Psoas muscle (tissue), 8 donors: ENCODE measurements at regions of chr1 and their contacts with region 1.

Region 1: DNA sequence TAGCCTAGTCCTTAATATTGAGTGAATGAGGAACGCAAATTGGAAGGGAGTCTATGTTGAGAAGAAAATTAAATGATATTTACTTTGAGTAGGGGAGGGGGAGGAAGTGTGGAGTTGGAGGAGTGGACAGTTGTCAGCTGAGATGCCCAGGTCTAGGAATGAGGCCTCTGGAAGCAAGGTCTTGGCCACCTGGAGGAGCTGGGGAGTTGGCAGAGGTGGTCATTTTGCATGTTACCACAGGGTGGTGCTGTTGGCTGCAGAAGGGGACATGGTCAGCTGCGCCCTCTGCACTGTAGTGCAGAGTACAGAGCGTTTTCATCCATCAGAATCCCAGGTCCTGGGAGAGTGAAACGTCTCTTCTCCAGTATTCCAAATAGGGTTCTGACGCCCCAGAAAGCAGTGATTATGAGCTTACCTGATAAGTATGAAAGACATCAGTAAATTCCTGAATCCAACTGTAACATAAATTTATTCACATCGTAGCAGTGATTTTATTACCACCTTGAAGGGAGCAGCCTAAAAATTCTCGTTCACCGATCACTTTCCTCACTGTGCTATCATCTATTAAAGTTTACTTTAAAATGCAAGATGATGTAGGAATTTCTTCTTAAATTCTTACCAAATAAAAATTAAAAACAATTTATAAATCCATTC is 13.8 kb downstream of the PARK7 start:
- DNase-seq: peak; percentile 62 to 83
- ATAC-seq: peak; percentile 95 to 98 (median 97)
- H3K4me3 ChIP-seq: no peak overlapping the region
- H3K27ac ChIP-seq: peak overlapping the region; percentile 32
- H3K4me1 ChIP-seq: peaks cover 19% of the 10 kb centered on the region
- H3K27me3 ChIP-seq: no peaks in the 10 kb centered on the region
- CTCF ChIP-seq: peak; percentile 91

Region 2: DNA sequence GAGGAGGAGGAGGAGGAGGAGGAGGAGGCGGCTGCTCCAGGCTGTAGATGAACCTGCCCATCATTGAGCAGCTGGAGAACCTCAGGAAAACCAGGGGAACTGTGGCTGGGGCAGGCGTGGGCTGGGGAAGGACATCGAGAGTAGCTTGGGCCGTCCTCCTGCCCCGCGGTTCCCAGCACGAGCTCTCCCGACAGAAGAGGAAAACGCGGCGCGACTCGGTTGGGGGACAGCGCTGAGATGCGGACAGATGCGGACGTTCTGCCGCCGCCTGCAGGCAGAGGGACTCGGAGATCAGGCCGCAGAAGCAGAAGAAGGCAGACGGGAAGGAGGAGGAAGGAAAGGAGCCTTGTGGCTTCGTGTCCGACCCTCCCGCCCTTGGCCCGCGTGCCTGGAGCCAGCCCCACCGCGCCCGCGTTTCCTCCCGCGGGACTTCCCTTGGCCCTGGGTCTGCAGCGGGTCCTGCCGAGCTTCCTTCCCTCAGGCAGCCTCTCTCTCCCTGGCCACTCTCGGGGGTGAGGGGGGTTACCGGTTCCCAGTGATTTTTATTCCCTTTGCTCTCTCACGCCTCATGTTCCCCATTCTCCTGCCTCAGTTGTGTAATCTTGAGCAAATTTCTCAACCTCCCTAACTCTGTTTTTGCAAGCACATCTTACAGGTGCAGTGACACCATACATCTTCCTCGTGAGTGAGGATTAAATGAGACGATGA is 33.0 kb before region 1 on chr1:
- intact Hi-C with region 1: no loop called
- DNase-seq: peak; percentile 59 to 77
- ATAC-seq: peak; percentile 57 to 82 (median 63)
- H3K4me3 ChIP-seq: peak overlapping the region; percentile 43
- H3K27ac ChIP-seq: no peak overlapping the region
- H3K4me1 ChIP-seq: peaks cover 5% of the 10 kb centered on the region
- H3K27me3 ChIP-seq: peaks cover 0 to 35% (median 8%) of the 10 kb centered on the region in 3 donors
- CTCF ChIP-seq: peak; percentile 30

Region 3: DNA sequence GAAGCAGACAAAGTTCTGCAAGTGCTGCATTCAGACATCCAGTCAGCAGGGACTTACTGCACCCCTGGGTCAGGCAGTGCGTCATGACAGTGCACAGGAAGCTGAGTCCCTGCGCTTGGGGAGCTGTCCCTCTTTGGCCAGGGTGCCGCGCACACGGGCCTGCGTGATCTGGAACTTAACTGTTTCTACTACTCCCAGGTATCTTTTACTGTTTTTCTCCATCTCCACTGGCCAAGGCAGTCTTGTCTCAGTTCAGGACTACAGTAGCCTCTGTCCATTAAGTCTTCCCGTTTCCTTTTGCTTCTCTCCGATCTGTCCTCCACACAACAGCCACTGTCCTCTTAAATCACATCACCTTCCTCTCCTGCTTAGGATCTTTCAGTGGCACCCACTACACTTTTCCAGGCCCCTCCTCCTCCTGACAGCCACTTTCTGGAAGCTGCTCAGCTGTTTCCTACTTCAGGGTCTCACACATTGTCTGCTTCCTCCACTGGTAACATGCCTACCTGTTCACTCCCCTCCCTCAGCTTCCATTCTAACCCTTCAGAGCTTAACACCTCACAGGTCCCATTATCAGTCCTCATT is 34.8 kb after region 1 on chr1:
- intact Hi-C with region 1: loop called (anchors 5 kb)
- DNase-seq: no peak
- ATAC-seq: peak in 2 of 4 donors; percentile 20 to 45
- H3K4me3 ChIP-seq: no peak overlapping the region
- H3K27ac ChIP-seq: peak overlapping the region; percentile 76
- H3K4me1 ChIP-seq: peaks cover 57% of the 10 kb centered on the region
- H3K27me3 ChIP-seq: no peaks in the 10 kb centered on the region
- CTCF ChIP-seq: no peak

Region 4: DNA sequence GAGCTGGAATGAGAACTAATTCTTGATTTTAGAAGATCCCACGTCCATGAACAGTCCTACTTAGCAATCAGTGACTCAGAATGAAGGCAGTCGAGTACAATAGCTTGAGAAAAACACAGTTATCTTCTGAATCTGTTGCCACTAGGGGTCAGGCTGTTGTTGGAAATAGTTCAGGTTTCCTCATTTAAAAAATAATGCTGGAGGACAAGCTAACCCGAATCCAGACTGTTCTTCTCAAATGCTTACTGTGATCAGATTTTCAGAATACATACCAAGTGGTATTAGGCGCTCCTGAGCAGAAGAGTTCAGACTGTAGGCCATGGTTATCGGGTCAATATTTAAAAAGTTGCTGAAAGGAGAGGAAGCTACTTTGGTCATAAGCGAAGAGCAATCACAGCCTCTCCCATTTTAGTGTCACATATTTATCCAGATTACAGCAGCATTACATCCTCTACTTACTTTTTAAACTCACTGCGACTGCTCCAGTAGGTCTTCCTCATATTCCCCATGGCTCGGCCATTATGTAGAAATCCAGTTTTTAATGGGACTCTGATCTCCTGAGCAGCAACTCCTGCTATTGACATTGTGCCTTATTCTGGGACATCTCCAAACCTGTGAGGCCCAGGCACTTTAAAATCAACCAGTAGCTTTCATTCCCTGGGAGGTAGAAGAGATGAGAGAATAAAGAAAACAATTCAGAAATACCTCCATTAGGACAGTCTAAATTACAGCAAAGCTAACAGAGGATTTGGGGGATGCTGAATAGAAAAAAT is 39.9 kb after region 1 on chr1:
- intact Hi-C with region 1: loop called (anchors 5 kb)
- DNase-seq: no peak
- ATAC-seq: peak in 2 of 4 donors; percentile 20 to 30
- H3K4me3 ChIP-seq: peak overlapping the region; percentile 1
- H3K27ac ChIP-seq: peak overlapping the region; percentile 62
- H3K4me1 ChIP-seq: peaks cover 78% of the 10 kb centered on the region
- H3K27me3 ChIP-seq: no peaks in the 10 kb centered on the region
- CTCF ChIP-seq: peak; percentile 71

Region 5: DNA sequence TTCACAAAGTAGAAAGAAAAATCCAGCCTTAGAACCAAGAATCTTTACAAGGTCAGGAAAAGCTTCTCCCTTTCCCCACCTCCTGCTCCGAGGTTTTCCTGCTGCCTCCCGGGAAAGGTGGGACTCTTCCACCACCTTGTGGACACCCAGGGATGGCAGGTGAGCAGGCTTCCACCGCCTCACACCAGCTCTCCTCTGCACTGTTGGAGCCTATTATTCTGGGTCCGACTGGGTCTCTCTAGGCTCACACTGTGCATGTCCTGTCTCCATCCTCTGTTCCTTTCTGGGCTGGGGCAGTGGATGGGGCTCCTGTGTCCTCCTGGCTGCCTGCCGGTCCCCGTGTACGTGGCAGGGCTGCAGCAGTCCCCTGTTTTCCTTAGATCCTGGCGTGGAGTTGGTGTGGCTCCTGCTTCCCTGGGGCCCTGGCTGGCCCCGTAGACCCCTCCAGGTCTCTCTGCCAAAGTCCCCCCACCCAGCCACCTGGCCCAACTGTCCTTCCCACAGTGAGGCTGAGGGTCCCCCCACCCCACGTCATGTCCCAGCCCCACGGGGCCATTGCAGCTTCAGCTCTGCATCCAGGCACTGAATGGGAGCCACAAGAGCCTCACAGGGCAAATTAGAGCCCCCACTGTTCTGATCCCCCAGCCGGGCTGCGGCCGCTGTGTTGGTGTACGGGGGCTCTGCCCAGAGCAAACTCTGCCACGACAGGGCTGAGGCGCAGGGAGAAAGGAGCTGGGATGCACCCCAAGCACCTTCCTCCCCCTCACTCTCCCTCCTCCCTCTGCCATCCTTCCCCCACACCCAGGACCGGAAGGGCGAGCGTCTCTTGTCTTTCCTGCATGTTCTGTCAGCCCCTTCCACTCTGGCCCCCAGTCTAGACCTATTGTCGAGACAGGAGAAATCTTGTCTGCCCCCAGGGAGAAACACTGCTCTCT is 339.3 kb after region 1 on chr1:
- intact Hi-C with region 1: loop called (anchors 1 to 2 kb)
- DNase-seq: peak; percentile 73 to 83
- ATAC-seq: peak; percentile 88 to 90 (median 89)
- H3K4me3 ChIP-seq: no peak overlapping the region
- H3K27ac ChIP-seq: no peak overlapping the region
- H3K4me1 ChIP-seq: peaks cover 7% of the 10 kb centered on the region
- H3K27me3 ChIP-seq: peaks cover 0 to 4% (median 0%) of the 10 kb centered on the region in 3 donors
- CTCF ChIP-seq: peak; percentile 85

Region 6: GRCh38 chr1:8348777-8349491 is 373.6 kb after region 1 on chr1:
- intact Hi-C with region 1: loop called in 1 of 2 experiments (anchors 1 kb)
- DNase-seq: peak; percentile 75 to 88
- ATAC-seq: peak; percentile 53 to 76 (median 67)
- H3K4me3 ChIP-seq: no peak overlapping the region
- H3K27ac ChIP-seq: no peak overlapping the region
- H3K4me1 ChIP-seq: peaks cover 6% of the 10 kb centered on the region
- H3K27me3 ChIP-seq: no peaks in the 10 kb centered on the region
- CTCF ChIP-seq: peak; percentile 80

Region 7: GRCh38 chr1:8629241-8630091 is 654.1 kb after region 1 on chr1:
- intact Hi-C with region 1: no loop called
- DNase-seq: no peak
- ATAC-seq: peak in 3 of 4 donors; percentile 63 to 77 (median 75)
- H3K4me3 ChIP-seq: no peak overlapping the region
- H3K27ac ChIP-seq: no peak overlapping the region
- H3K4me1 ChIP-seq: peaks cover 41% of the 10 kb centered on the region
- H3K27me3 ChIP-seq: no peaks in the 10 kb centered on the region
- CTCF ChIP-seq: no peak